ENCODE measurements at regions of chr14 and their contacts with region 1.

Region 1: GRCh38 chr14:71320107-71320733 is 413.0 kb downstream of the PCNX1 start:
- DNase-seq: peak; percentile 65
- ATAC-seq: peak; percentile 93
- H3K4me3 ChIP-seq: peak within 1 kb of the TSS; percentile 66 to 82
- H3K27ac ChIP-seq: peak within 1 kb of the TSS; percentile 80
- H3K4me1 ChIP-seq: peaks cover 30% of the 10 kb centered on the region
- H3K27me3 ChIP-seq: no peaks in the 10 kb centered on the region
- CTCF ChIP-seq: no peak

Region 2: GRCh38 chr14:70108419-70108818 is 1211.8 kb before region 1 on chr14:
- CTCF ChIA-PET with region 1: no interaction called
- POLR2A ChIA-PET with region 1: no interaction called
- in situ Hi-C with region 1: no loop called
- intact Hi-C with region 1: no loop called
- DNase-seq: no peak
- ATAC-seq: no peak
- H3K4me3 ChIP-seq: no peak overlapping the region
- H3K27ac ChIP-seq: no peak overlapping the region
- H3K4me1 ChIP-seq: no peaks in the 10 kb centered on the region
- H3K27me3 ChIP-seq: peaks cover 5% of the 10 kb centered on the region
- CTCF ChIP-seq: no peak

Region 3: GRCh38 chr14:71117839-71118743 is 202.1 kb before region 1 on chr14:
- CTCF ChIA-PET with region 1: no interaction called
- POLR2A ChIA-PET with region 1: no interaction called
- in situ Hi-C with region 1: no loop called
- intact Hi-C with region 1: no loop called
- DNase-seq: no peak
- ATAC-seq: no peak
- H3K4me3 ChIP-seq: no peak overlapping the region
- H3K27ac ChIP-seq: no peak overlapping the region
- H3K4me1 ChIP-seq: no peaks in the 10 kb centered on the region
- H3K27me3 ChIP-seq: no peaks in the 10 kb centered on the region
- CTCF ChIP-seq: no peak

Region 4: GRCh38 chr14:71142336-71143038 is 177.7 kb before region 1 on chr14:
- CTCF ChIA-PET with region 1: no interaction called
- POLR2A ChIA-PET with region 1: no interaction called
- in situ Hi-C with region 1: no loop called
- intact Hi-C with region 1: loop called (anchors 10 kb)
- DNase-seq: no peak
- ATAC-seq: no peak
- H3K4me3 ChIP-seq: no peak overlapping the region
- H3K27ac ChIP-seq: no peak overlapping the region
- H3K4me1 ChIP-seq: no peaks in the 10 kb centered on the region
- H3K27me3 ChIP-seq: no peaks in the 10 kb centered on the region
- CTCF ChIP-seq: no peak

Region 5: GRCh38 chr14:71403656-71404055 is 83.4 kb after region 1 on chr14:
- CTCF ChIA-PET with region 1: no interaction called
- POLR2A ChIA-PET with region 1: interaction called, 3 read pairs
- in situ Hi-C with region 1: no loop called
- intact Hi-C with region 1: loop called (anchors 10 kb)
- DNase-seq: no peak
- ATAC-seq: no peak; the same call in 1 of the 2 replicates
- H3K4me3 ChIP-seq: no peak overlapping the region
- H3K27ac ChIP-seq: no peak overlapping the region
- H3K4me1 ChIP-seq: no peaks in the 10 kb centered on the region
- H3K27me3 ChIP-seq: no peaks in the 10 kb centered on the region
- CTCF ChIP-seq: peak; percentile 12; the same call in 1 of the 2 replicates

Region 6: DNA sequence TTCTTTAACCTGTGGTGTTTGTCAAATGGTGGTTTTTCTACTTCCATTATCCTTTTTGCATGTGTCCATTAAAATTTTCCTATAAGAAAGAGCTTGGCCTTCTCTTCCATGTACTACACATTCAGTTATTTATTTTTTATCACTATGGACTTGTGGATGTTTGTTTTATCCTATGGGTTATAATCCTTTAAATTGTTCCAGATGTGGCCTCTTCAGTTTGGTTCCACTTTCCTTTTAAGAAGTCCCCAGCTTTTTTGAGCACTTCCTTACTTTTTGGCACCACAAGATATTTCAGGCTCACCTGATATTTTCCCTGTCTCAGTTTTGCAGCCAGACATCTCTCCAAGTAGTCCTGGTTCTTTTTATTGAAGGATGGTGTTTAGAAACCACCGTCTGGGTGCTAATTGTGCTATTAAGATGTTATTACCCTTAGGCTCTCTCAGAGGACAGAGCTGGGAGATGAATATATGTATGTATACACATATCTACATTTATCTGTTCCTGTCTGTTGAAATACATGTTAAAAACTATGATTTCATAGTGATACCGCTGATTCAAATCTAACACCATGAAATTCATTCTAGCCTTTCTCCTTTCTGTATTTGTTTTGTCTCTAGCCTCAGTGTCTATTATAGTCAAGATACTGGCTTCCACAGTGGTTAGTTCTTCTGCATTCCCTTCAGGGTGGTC is 203.6 kb after region 1 on chr14:
- CTCF ChIA-PET with region 1: no interaction called
- POLR2A ChIA-PET with region 1: no interaction called
- in situ Hi-C with region 1: no loop called
- intact Hi-C with region 1: no loop called
- DNase-seq: no peak
- ATAC-seq: no peak
- H3K4me3 ChIP-seq: no peak overlapping the region
- H3K27ac ChIP-seq: no peak overlapping the region
- H3K4me1 ChIP-seq: no peaks in the 10 kb centered on the region; the same call in 1 of the 2 replicates
- H3K27me3 ChIP-seq: no peaks in the 10 kb centered on the region
- CTCF ChIP-seq: no peak

Region 7: GRCh38 chr14:71753126-71753830 is 433.1 kb after region 1 on chr14:
- CTCF ChIA-PET with region 1: no interaction called
- POLR2A ChIA-PET with region 1: no interaction called
- in situ Hi-C with region 1: no loop called
- intact Hi-C with region 1: loop called (anchors 10 kb)
- DNase-seq: peak; percentile 43
- ATAC-seq: peak; percentile 84; the same call in 1 of the 2 replicates
- H3K4me3 ChIP-seq: no peak overlapping the region
- H3K27ac ChIP-seq: no peak overlapping the region
- H3K4me1 ChIP-seq: no peaks in the 10 kb centered on the region
- H3K27me3 ChIP-seq: no peaks in the 10 kb centered on the region
- CTCF ChIP-seq: peak; percentile 88

Region 8: DNA sequence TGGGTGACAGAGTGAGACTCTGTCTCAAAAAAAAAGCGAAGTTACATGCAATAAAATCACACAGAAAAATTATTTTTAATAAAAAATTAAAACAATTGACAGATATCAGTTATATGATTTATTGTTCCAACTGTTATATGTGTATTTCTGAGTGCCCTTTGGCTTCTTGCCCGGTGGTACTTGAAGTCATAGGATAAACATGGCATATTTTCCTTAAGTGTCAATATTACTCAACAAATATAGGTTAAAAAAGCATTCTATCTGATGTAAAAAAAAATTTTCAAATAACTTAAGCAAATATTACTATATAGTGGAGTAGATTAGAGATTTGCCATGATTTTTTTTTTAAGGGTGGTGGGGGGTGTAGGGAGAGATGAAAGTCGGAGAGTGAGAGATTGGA is 1771.6 kb after region 1 on chr14:
- CTCF ChIA-PET with region 1: no interaction called
- POLR2A ChIA-PET with region 1: no interaction called
- in situ Hi-C with region 1: no loop called
- intact Hi-C with region 1: no loop called
- DNase-seq: no peak
- ATAC-seq: no peak
- H3K4me3 ChIP-seq: no peak overlapping the region
- H3K27ac ChIP-seq: no peak overlapping the region
- H3K4me1 ChIP-seq: no peaks in the 10 kb centered on the region
- H3K27me3 ChIP-seq: no peaks in the 10 kb centered on the region
- CTCF ChIP-seq: no peak